Transverse colon (tissue), 4 donors: ENCODE measurements at regions of chr10 and their contacts with region 1.

Region 1: DNA sequence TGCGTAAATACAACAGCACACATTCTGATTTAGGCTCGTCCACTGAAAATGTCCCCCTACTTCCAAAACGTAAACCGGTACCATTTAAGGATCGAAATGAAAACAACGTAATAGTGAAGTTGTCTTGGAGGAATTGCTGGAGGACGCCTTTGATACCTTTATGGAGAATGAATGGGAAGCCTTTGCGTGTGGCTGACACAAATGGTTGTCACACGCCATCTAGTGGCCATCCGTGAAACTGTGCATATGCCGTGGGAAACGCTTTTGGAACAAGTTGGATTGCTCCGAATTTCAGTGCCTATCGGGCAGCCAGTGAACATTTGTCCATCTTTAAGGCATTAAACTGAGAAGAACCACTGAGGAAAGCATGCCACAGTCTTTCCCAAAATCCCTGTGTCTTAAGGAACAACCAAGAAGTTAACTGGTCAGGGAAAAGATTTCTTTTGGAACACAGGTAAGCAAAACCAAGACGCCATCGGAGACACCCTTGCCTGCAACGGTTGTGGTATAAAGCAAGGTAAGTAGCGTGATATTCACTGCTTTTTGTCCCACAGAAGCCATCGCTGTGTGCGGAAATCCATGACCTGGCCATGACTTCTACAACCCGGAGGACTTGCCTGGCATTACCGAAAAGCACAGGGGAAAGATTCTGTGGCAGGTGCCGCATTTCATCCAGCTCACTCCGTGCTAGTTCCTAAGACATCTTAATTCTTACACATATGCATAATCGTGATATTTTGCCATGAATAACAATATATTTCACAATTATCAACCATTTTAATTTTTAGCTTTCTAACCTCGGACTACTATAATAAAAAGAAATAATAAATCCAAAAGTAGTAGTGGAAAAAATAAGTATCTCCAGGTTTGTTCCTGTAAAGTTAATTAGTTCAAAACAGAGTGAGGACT is 100.6 kb downstream of the FAM204A start:
- DNase-seq: peak; percentile 80
- H3K4me3 ChIP-seq: no peak overlapping the region
- H3K27ac ChIP-seq: no peak overlapping the region
- H3K4me1 ChIP-seq: no peaks in the 10 kb centered on the region
- H3K27me3 ChIP-seq: peaks cover 76% of the 10 kb centered on the region
- CTCF ChIP-seq: peak; percentile 86 to 93 (median 92)
- EP300 ChIP-seq: no peak
- POLR2A ChIP-seq: no peak

Region 2: DNA sequence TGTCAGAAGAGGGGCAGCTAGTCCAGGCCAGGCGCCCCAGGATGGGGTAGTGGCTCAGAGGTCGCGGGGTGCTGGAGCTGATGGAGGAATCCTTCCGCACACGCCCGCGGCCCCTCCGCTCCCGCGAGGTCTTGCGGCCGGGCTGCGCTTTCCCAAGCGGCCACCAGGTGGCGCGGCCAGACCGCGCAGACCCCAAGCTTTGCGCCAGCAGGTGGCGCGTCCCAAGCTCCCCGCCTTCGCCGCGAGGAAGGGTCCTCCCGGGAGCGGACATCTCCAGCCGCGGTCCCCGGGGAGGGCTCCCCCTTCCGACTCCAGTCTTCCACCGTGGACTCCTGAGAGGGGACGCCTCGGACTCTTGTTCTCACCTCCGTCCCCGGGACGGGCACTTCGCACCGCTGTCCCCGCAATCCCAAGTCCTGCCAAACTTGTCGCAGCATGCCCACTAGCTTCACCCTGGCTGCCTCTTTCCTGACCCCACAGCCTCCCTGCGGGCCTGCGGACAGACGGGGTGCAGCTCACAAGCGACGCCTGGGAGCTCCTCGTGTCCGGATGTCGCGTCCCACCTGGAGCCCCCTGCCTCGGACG is 1024.8 kb before region 1 on chr10:
- in situ Hi-C with region 1: loop called in 2 of 4 experiments (anchors 10 to 25 kb)
- intact Hi-C with region 1: loop called (anchors 5 kb)
- DNase-seq: peak; percentile 65
- H3K4me3 ChIP-seq: peak overlapping the region in 3 of 4 donors; percentile 24 to 58 (median 42)
- H3K27ac ChIP-seq: no peak overlapping the region
- H3K4me1 ChIP-seq: peaks cover 0 to 13% (median 12%) of the 10 kb centered on the region in 4 donors
- H3K27me3 ChIP-seq: peaks cover 71% of the 10 kb centered on the region
- CTCF ChIP-seq: peak; percentile 98 to 100 (median 100)
- EP300 ChIP-seq: no peak
- POLR2A ChIP-seq: no peak

Region 3: GRCh38 chr10:117496616-117497028 is 744.9 kb before region 1 on chr10:
- in situ Hi-C with region 1: loop called in 3 of 4 experiments (anchors 10 to 25 kb)
- intact Hi-C with region 1: loop called (anchors 2 kb)
- DNase-seq: peak; percentile 81
- H3K4me3 ChIP-seq: no peak overlapping the region
- H3K27ac ChIP-seq: no peak overlapping the region
- H3K4me1 ChIP-seq: peaks cover 0 to 3% (median 1%) of the 10 kb centered on the region in 4 donors
- H3K27me3 ChIP-seq: peaks cover 19% of the 10 kb centered on the region
- CTCF ChIP-seq: peak; percentile 91 to 97 (median 93)
- EP300 ChIP-seq: no peak
- POLR2A ChIP-seq: no peak

Region 4: GRCh38 chr10:117503244-117504205 is 738.0 kb before region 1 on chr10:
- in situ Hi-C with region 1: loop called in 3 of 4 experiments (anchors 10 to 25 kb)
- intact Hi-C with region 1: loop called (anchors 2 kb)
- DNase-seq: no peak
- H3K4me3 ChIP-seq: no peak overlapping the region
- H3K27ac ChIP-seq: no peak overlapping the region
- H3K4me1 ChIP-seq: peaks cover 0 to 5% (median 0%) of the 10 kb centered on the region in 4 donors
- H3K27me3 ChIP-seq: peaks cover 6% of the 10 kb centered on the region
- CTCF ChIP-seq: no peak
- EP300 ChIP-seq: no peak
- POLR2A ChIP-seq: no peak

Region 5: DNA sequence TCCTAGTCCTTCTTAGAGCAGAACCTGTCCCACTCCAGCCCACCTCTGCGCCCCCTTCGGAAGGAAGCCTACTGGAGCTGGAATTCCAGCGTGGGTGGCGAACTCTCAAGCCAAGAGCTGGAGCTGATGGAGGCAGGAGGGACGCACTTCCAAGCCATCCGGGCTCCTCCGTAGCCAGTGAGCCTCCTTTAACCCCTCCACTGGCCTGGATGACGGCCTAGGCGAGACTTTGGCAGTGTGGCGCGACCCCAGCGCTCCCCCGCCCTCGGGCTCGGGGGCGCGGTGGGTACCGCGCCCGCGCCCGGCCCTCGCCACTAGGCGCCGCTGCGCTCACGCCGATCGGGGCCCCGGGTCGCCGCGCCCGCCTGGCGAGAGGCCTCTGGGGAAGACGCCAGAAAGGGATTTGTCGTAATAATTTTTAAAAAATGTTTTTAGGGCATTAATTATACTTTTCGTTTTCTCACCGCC is 704.0 kb before region 1 on chr10:
- in situ Hi-C with region 1: loop called in 1 of 4 experiments (anchors 25 kb)
- intact Hi-C with region 1: no loop called
- DNase-seq: no peak
- H3K4me3 ChIP-seq: peak overlapping the region in 1 of 4 donors; percentile 17
- H3K27ac ChIP-seq: no peak overlapping the region
- H3K4me1 ChIP-seq: peaks cover 14 to 40% (median 28%) of the 10 kb centered on the region in 4 donors
- H3K27me3 ChIP-seq: peaks cover 100% of the 10 kb centered on the region
- CTCF ChIP-seq: peak in 4 of 5 experiments; percentile 20 to 64 (median 52)
- EP300 ChIP-seq: no peak
- POLR2A ChIP-seq: no peak

Region 6: DNA sequence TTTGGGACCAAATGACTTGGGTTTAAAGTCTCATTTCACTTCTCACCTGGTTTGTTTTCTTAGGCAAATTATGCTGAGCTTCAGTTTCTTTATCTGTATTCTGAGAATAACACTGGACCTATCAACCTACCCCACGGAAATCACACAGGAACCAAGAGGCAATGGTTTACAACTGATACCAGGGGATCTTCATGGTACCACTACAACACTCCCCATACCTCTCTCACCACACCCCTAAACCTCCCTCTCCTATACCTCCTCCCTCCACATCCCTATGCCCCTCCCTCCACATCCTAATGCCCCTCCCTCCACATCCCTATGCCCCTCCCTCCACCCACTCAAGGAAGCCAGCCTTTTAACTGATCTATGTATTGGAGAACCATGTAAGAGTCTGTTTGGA is 90.8 kb after region 1 on chr10:
- in situ Hi-C with region 1: no loop called
- intact Hi-C with region 1: no loop called
- DNase-seq: no peak
- H3K4me3 ChIP-seq: no peak overlapping the region
- H3K27ac ChIP-seq: no peak overlapping the region
- H3K4me1 ChIP-seq: peaks cover 0 to 11% (median 0%) of the 10 kb centered on the region in 4 donors
- H3K27me3 ChIP-seq: no peaks in the 10 kb centered on the region
- CTCF ChIP-seq: no peak
- EP300 ChIP-seq: no peak
- POLR2A ChIP-seq: no peak

Region 7: DNA sequence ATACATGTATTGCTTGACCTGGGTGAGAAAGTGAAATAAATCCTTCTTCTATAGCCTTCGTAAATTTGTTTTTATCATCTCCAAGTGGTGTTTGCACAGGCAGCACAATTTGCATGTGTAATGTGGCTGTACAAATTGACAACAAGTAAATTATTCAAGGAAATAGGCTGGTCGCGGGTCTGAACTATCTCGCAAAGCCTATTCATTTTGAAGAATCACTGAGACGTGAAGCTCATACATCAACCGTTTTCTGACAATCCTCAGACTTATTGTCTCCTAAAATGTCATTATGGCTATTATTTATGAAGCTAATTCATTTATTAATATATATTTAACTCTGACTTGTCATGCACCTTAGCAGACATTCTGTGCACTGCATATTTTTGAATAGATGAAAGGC is 116.8 kb after region 1 on chr10:
- in situ Hi-C with region 1: no loop called
- intact Hi-C with region 1: loop called (anchors 5 kb)
- DNase-seq: no peak
- H3K4me3 ChIP-seq: no peak overlapping the region
- H3K27ac ChIP-seq: no peak overlapping the region
- H3K4me1 ChIP-seq: no peaks in the 10 kb centered on the region
- H3K27me3 ChIP-seq: no peaks in the 10 kb centered on the region
- CTCF ChIP-seq: no peak
- EP300 ChIP-seq: no peak
- POLR2A ChIP-seq: no peak